Aorta (tissue), 5 donors: ENCODE measurements at regions of chr20 and their contacts with region 1.

Region 1: DNA sequence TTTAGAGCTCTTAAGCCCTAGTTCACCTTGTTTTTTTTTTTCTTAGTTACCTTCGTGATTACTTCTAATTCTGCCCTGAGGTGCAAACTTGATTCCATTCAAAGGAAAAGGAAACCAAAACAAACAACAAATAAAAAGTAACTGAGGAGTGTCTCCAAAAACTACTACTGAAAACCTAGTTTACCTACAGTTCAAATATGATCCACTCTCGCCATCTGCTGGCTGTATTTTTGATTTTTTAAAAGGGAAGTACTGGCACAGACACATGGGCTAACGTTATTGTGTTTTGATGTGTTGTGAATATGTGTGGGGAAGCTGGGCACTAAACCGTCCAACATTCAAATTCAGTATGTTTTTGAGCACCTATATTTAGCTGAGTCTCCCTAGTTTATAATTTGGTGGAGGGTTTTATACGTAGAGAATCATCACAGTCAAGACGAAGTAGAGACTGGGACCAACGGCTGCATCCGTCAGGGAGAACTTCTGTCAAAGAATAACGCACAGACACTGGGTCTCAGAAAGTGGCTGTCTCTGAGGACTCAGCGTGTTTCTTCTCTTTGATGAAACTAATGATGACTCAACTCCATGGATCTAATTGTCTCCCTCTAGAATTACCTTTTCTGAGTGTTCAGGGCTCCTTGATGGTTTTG is 373.5 kb upstream of the BTBD3 start:
- DNase-seq: no peak
- ATAC-seq: peak; percentile 78
- H3K4me3 ChIP-seq: no peak overlapping the region
- H3K27ac ChIP-seq: no peak overlapping the region
- H3K4me1 ChIP-seq: no peaks in the 10 kb centered on the region
- H3K27me3 ChIP-seq: no peaks in the 10 kb centered on the region

Region 2: GRCh38 chr20:10434467-10434831 is 1109.7 kb before region 1 on chr20:
- intact Hi-C with region 1: loop called in 1 of 2 experiments (anchors 10 kb)
- DNase-seq: peak; percentile 91 to 94
- ATAC-seq: peak; percentile 96
- H3K4me3 ChIP-seq: peak overlapping the region; percentile 69 to 92
- H3K27ac ChIP-seq: peak overlapping the region; percentile 55 to 72
- H3K4me1 ChIP-seq: no peaks in the 10 kb centered on the region
- H3K27me3 ChIP-seq: no peaks in the 10 kb centered on the region

Region 3: GRCh38 chr20:11296951-11297350 is 247.2 kb before region 1 on chr20:
- intact Hi-C with region 1: loop called in 1 of 2 experiments (anchors 10 kb)
- DNase-seq: no peak
- ATAC-seq: no peak
- H3K4me3 ChIP-seq: no peak overlapping the region
- H3K27ac ChIP-seq: no peak overlapping the region
- H3K4me1 ChIP-seq: no peaks in the 10 kb centered on the region
- H3K27me3 ChIP-seq: no peaks in the 10 kb centered on the region

Region 4: GRCh38 chr20:11473983-11474382 is 70.2 kb before region 1 on chr20:
- intact Hi-C with region 1: no loop called
- DNase-seq: no peak
- ATAC-seq: no peak
- H3K4me3 ChIP-seq: no peak overlapping the region
- H3K27ac ChIP-seq: no peak overlapping the region
- H3K4me1 ChIP-seq: no peaks in the 10 kb centered on the region
- H3K27me3 ChIP-seq: no peaks in the 10 kb centered on the region

Region 5: GRCh38 chr20:11569163-11569562 is 25.0 kb after region 1 on chr20:
- intact Hi-C with region 1: no loop called
- DNase-seq: no peak
- ATAC-seq: no peak
- H3K4me3 ChIP-seq: no peak overlapping the region
- H3K27ac ChIP-seq: no peak overlapping the region
- H3K4me1 ChIP-seq: no peaks in the 10 kb centered on the region
- H3K27me3 ChIP-seq: no peaks in the 10 kb centered on the region

Region 6: DNA sequence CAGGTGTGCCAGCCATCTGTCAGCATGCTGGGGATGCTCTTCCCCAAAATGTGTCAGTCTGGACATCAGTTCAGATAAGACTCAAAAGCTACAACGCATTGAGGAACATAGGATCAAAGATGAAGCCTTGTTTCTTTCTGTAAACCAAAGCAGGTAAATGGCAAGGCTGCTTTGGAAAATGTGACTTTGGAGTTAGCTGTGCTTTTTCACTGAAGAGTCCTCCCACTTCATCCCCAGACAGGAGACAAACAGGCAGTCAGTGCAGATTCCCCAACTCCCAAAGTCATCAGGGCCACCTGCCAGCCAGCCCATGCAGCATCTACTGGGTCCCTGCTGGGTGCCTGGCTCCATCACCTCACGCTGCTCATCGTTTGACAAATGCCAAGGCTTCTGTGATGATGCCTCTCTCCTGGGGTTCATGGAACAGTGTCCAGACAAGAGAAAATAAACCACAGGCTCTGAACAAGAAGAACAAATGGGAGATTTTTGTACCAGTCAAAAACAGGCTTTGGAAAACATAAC is 168.5 kb after region 1 on chr20:
- intact Hi-C with region 1: no loop called
- DNase-seq: no peak
- ATAC-seq: no peak
- H3K4me3 ChIP-seq: no peak overlapping the region
- H3K27ac ChIP-seq: no peak overlapping the region
- H3K4me1 ChIP-seq: no peaks in the 10 kb centered on the region
- H3K27me3 ChIP-seq: no peaks in the 10 kb centered on the region